Panc1 (cell line): ENCODE measurements at regions of chr7 and their contacts with region 1.

Region 1: GRCh38 chr7:12458520-12459131 is 55.0 kb upstream of the VWDE start:
- DNase-seq: no peak
- ATAC-seq: peak; percentile 99
- H3K4me3 ChIP-seq: no peak overlapping the region
- H3K27ac ChIP-seq: no peak overlapping the region
- H3K4me1 ChIP-seq: no peaks in the 10 kb centered on the region
- H3K27me3 ChIP-seq: no peaks in the 10 kb centered on the region
- CTCF ChIP-seq: peak; percentile 85; the same call in 1 of the 2 replicates

Region 2: DNA sequence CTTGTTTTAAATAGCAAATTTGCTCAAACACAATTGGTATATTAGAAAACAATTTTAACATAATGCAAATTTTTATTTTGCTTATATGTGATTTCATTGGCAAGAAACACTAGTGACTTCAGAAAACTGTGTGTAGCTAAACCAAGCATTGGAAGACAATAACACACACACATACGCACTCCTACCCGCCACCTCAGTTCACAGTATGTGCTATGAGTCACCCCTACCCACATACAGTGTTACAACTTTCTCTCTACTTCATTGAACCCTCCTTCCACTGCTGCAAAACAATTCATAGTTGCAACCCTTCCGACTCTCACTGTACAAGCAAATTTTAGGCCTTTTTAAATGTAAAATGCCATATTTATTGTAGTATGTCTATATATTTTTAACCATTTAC is 506.7 kb before region 1 on chr7:
- CTCF ChIA-PET with region 1: no interaction called
- POLR2A ChIA-PET with region 1: no interaction called
- in situ Hi-C with region 1: no loop called
- intact Hi-C with region 1: no loop called
- DNase-seq: no peak
- ATAC-seq: no peak
- H3K4me3 ChIP-seq: no peak overlapping the region
- H3K27ac ChIP-seq: no peak overlapping the region
- H3K4me1 ChIP-seq: no peaks in the 10 kb centered on the region
- H3K27me3 ChIP-seq: no peaks in the 10 kb centered on the region
- CTCF ChIP-seq: no peak

Region 3: DNA sequence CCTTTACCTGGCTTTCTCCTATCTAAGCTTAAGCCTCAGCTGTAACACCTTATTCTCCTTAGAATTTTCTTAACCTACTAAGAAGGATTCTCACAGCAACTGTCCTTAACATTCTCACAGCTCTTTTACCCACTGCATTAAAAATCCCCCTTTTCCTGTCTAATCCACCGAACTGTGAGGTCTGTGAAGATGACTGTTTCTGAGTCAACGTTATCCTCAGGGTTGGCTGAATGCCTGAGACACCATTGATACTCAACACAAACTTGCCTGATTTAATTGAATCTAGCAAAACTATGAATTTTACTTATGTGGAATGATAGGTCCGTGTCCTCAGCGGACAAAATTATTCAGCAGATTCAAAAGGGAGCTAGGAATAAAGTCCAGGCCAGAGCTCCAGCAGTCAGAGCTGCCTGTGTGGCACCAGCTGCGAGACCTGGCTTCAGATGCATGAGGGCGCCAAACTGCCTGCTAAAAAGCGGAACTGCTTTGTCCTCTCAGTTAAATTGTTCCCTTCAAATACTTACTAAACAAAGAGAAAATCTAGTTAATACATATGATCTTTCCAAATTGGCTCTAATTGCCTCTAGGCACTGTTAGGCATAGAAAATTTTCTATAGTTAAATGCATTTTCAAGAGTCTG is 21.6 kb before region 1 on chr7:
- CTCF ChIA-PET with region 1: interaction called, 16 read pairs
- POLR2A ChIA-PET with region 1: no interaction called
- in situ Hi-C with region 1: no loop called
- intact Hi-C with region 1: no loop called
- DNase-seq: no peak
- ATAC-seq: peak; percentile 81; the same call in 1 of the 2 replicates
- H3K4me3 ChIP-seq: no peak overlapping the region
- H3K27ac ChIP-seq: no peak overlapping the region
- H3K4me1 ChIP-seq: no peaks in the 10 kb centered on the region
- H3K27me3 ChIP-seq: peaks cover 5% of the 10 kb centered on the region; the same call in 1 of the 2 replicates
- CTCF ChIP-seq: peak; percentile 76

Region 4: DNA sequence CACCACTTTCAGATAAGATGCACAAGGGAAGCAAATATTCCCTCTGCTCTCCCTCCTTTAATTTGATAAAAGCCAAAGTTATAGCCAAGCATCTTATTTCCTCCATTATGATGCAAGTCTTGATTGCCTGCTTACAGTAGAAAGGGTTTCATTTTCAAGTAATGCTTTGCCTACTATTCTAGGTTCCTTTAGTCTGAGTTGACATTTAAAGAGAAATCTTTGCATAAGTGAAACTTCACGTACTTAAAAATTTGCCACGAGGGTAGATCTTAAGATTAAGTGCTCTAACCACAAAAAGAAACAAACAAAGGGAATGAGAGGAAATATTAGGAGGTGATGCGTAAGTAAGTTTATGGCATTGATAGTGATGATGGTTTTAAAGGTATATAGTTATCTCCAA is 23.1 kb after region 1 on chr7:
- CTCF ChIA-PET with region 1: interaction called, 13 read pairs
- POLR2A ChIA-PET with region 1: no interaction called
- in situ Hi-C with region 1: no loop called
- intact Hi-C with region 1: no loop called
- DNase-seq: no peak
- ATAC-seq: no peak
- H3K4me3 ChIP-seq: no peak overlapping the region
- H3K27ac ChIP-seq: no peak overlapping the region
- H3K4me1 ChIP-seq: no peaks in the 10 kb centered on the region
- H3K27me3 ChIP-seq: no peaks in the 10 kb centered on the region
- CTCF ChIP-seq: no peak

Region 5: GRCh38 chr7:12490117-12490688 is 31.6 kb after region 1 on chr7:
- CTCF ChIA-PET with region 1: interaction called, 55 read pairs
- POLR2A ChIA-PET with region 1: no interaction called
- in situ Hi-C with region 1: no loop called
- intact Hi-C with region 1: loop called (anchors 1 kb)
- DNase-seq: no peak
- ATAC-seq: peak; percentile 76; the same call in 1 of the 2 replicates
- H3K4me3 ChIP-seq: no peak overlapping the region
- H3K27ac ChIP-seq: no peak overlapping the region
- H3K4me1 ChIP-seq: no peaks in the 10 kb centered on the region
- H3K27me3 ChIP-seq: no peaks in the 10 kb centered on the region
- CTCF ChIP-seq: peak; percentile 65; the same call in 1 of the 2 replicates

Region 6: DNA sequence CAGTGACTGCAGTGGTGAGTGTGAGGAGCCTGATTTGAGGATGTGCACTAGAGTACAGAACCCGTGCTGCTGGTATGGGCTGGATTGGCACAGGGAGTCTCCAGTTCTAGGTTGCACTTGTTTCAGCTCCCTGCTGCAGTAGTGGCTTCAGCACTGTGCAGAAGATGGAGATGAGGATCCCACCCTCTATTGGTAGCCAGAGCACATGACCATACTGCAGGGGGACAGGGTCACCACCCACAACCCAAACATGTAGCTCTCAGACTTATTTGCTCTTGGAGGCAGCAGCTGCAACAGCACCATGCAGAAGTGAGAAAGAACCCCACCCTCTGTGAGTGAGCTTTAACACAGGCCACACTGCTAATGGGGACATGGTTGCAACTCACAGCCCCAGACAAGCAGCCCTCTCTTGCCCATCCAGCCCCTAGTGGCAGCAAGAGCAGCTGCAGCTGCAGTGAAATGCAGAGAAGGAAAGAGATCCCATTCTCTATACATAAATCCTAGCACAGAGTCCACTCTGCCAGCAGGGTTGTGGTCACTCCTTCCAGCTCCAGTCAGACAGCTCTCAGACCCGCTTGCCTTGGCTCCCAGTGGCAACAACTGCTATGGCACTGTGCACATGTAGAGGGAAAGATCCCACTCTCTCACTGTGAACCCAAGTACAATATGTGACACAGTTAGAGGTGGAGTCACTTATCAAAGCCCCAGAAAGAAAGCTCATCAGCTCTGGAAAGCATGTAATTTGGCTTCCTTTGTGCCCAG is 60.5 kb after region 1 on chr7:
- CTCF ChIA-PET with region 1: interaction called, 11 read pairs
- POLR2A ChIA-PET with region 1: no interaction called
- in situ Hi-C with region 1: no loop called
- intact Hi-C with region 1: no loop called
- DNase-seq: no peak
- ATAC-seq: peak; percentile 92
- H3K4me3 ChIP-seq: no peak overlapping the region
- H3K27ac ChIP-seq: no peak overlapping the region
- H3K4me1 ChIP-seq: no peaks in the 10 kb centered on the region
- H3K27me3 ChIP-seq: peaks cover 8% of the 10 kb centered on the region
- CTCF ChIP-seq: peak; percentile 82